H1 (cell line): ENCODE measurements at regions of chr11 and their contacts with region 1.

Region 1: GRCh38 chr11:73404048-73404447 is 27.8 kb downstream of the RELT start:
- DNase-seq: peak in 1 of 2 experiments; percentile 68
- H3K4me3 ChIP-seq: no peak overlapping the region
- H3K27ac ChIP-seq: no peak overlapping the region
- H3K4me1 ChIP-seq: peaks cover 0 to 3% (median 1%) of the 10 kb centered on the region in 4 experiments; a peak in 5 of 7 replicates
- H3K27me3 ChIP-seq: no peaks in the 10 kb centered on the region
- CTCF ChIP-seq: peak; percentile 76 to 84 (median 77)
- EP300 ChIP-seq: no peak
- POLR2A ChIP-seq: no peak
- RAD21 ChIP-seq: peak; percentile 89 to 90

Region 2: DNA sequence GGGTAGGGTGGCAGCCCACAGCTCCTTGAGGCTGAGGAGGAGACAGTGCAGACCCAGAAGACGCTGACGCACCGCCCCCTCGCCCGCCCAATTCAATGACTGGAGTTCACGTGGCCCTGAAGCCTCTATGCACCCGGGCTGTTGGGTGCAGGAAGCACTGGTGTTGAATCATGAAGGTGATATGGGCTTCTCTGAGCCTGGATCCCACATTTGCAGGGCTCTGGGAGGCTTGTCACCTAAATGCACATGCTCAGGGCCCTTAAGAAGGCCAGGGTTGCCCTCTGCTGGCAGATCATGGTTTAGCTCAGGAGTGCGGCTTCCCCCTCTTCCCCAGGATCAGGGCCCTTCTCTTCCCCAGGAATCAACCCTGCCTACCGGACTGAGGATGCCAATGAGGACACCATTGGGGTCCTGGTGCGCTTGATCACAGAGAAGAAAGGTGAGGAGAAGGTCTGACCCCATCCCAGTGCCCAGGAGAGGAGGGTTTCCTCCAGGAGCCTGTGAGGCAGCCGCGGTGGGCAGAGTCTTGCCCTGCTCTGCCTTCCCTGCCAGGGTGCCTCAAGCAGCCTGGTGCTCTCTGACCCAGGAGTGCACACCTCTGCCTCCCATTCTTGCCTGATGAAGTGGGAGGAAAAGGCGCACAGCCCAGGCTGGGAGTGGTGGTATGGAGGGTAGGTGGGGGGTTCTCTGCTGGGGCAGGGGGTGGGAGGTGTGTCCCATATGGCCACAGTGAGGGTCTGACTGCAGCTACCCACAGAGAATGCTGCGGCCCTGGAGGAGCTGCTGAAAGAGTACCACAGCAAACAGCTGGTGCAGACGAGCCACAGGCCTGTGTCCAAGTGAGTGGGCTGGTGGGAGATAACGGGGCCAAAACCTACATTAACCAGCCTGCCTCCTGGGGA is 10.3 kb before region 1 on chr11:
- CTCF ChIA-PET with region 1: interaction called, 12 read pairs
- POLR2A ChIA-PET with region 1: interaction called, 4 read pairs
- DNase-seq: peak; percentile 61 to 89
- H3K4me3 ChIP-seq: no peak overlapping the region
- H3K27ac ChIP-seq: no peak overlapping the region
- H3K4me1 ChIP-seq: no peaks in the 10 kb centered on the region; a peak in 1 of 7 replicates
- H3K27me3 ChIP-seq: no peaks in the 10 kb centered on the region
- CTCF ChIP-seq: peak; percentile 89 to 99 (median 96)
- EP300 ChIP-seq: no peak
- POLR2A ChIP-seq: no peak
- RAD21 ChIP-seq: peak; percentile 95 to 97

Region 3: DNA sequence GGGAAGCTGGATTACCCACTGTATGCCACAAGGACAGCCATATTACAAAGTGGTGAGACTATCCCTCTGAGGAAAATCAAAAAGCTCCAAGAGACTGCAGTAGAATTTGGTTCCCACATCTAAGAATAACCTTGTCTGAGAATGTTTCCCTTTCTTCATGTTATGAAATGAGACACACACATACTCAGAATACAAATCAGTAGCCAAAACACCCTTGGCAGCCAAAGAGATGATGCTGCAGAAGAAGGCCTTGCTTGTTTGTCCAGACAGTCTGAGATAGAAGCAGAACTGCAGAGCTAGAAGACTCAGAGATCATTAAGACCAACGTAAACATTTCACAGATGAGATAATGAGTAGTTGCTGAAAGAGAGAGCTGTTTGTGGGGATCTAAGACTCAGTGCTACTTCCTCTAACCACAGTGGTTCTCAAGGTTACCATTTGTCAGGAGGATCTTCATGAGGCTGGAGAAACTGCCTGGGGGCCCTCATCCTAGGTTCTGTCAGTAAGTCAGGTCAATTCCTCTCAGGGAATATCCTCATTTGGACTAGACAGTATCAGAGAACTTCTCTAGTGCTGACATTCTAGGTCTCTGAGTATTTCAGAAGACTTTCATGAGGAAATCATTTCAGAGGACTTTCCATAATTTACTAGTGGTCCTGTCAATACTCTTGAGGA is 11.1 kb after region 1 on chr11:
- CTCF ChIA-PET with region 1: interaction called, 20 read pairs
- POLR2A ChIA-PET with region 1: interaction called, 3 read pairs
- DNase-seq: no peak
- H3K4me3 ChIP-seq: no peak overlapping the region
- H3K27ac ChIP-seq: no peak overlapping the region
- H3K4me1 ChIP-seq: no peaks in the 10 kb centered on the region
- H3K27me3 ChIP-seq: no peaks in the 10 kb centered on the region
- CTCF ChIP-seq: no peak
- EP300 ChIP-seq: no peak
- POLR2A ChIP-seq: no peak
- RAD21 ChIP-seq: no peak

Region 4: DNA sequence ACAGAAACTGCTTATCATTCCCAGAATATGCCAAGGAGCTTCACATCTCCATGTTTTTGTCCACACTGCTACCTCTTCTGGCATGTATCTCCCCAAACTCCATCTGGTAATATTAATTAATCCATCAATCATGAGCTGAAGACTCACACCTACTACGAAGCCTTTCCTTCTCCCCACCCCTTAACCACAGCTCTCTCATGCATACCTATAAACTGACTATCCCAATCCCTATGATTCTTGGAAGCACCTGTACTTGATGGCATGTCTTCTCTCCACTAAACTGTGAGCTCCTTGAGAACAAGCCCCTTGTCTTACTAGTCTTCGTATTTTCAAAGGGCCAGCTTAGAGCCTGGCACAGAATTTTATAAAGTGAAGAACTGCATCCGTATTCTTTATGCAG is 19.5 kb after region 1 on chr11:
- CTCF ChIA-PET with region 1: interaction called, 14 read pairs
- POLR2A ChIA-PET with region 1: interaction called, 3 read pairs
- DNase-seq: no peak
- H3K4me3 ChIP-seq: no peak overlapping the region
- H3K27ac ChIP-seq: no peak overlapping the region
- H3K4me1 ChIP-seq: peaks cover 0 to 2% (median under 1%) of the 10 kb centered on the region in 4 experiments; a peak in 2 of 7 replicates
- H3K27me3 ChIP-seq: no peaks in the 10 kb centered on the region
- CTCF ChIP-seq: no peak
- EP300 ChIP-seq: no peak
- POLR2A ChIP-seq: no peak
- RAD21 ChIP-seq: no peak

Region 5: GRCh38 chr11:73647459-73648100 is 243.5 kb after region 1 on chr11:
- CTCF ChIA-PET with region 1: interaction called, 16 read pairs
- POLR2A ChIA-PET with region 1: interaction called, 3 read pairs
- DNase-seq: peak; percentile 70 to 96
- H3K4me3 ChIP-seq: peak overlapping the region; percentile 41 to 73 (median 58)
- H3K27ac ChIP-seq: no peak overlapping the region
- H3K4me1 ChIP-seq: peaks cover 9 to 25% (median 18%) of the 10 kb centered on the region in 4 experiments
- H3K27me3 ChIP-seq: peaks cover 0 to 4% (median 0%) of the 10 kb centered on the region in 4 experiments; a peak in 3 of 7 replicates
- CTCF ChIP-seq: no peak
- EP300 ChIP-seq: 0 out of 3 replicates have a peak, but pooled peaks of 1 of the 2 experiments have one; percentile 51
- POLR2A ChIP-seq: no peak
- RAD21 ChIP-seq: no peak; a peak in 1 of 4 replicates